ENCODE measurements at regions of chr3 and their contacts with region 1.

Region 1: GRCh38 chr3:183385698-183386613 is 42.5 kb downstream of the MCF2L2 start:
- DNase-seq: no peak
- ATAC-seq: peak; percentile 85
- H3K4me3 ChIP-seq: no peak overlapping the region
- H3K27ac ChIP-seq: no peak overlapping the region
- H3K4me1 ChIP-seq: peaks cover 7% of the 10 kb centered on the region; the same call in 1 of the 2 replicates
- H3K27me3 ChIP-seq: no peaks in the 10 kb centered on the region
- CTCF ChIP-seq: peak; percentile 63 to 87 (median 81); a peak in 5 of 6 replicates
- EP300 ChIP-seq: no peak
- POLR2A ChIP-seq: no peak
- RAD21 ChIP-seq: peak; percentile 84

Region 2: GRCh38 chr3:183085634-183086390 is 300.1 kb before region 1 on chr3:
- CTCF ChIA-PET with region 1: interaction called, 13 read pairs
- POLR2A ChIA-PET with region 1: no interaction called
- RAD21 ChIA-PET with region 1: interaction called, 3 read pairs
- SMC1A ChIA-PET with region 1: interaction called, 5 read pairs
- in situ Hi-C with region 1: no loop called
- intact Hi-C with region 1: no loop called
- DNase-seq: no peak
- ATAC-seq: peak; percentile 54
- H3K4me3 ChIP-seq: no peak overlapping the region
- H3K27ac ChIP-seq: no peak overlapping the region
- H3K4me1 ChIP-seq: no peaks in the 10 kb centered on the region
- H3K27me3 ChIP-seq: no peaks in the 10 kb centered on the region
- CTCF ChIP-seq: peak; percentile 26 to 50 (median 36); a peak in 5 of 6 replicates
- EP300 ChIP-seq: no peak
- POLR2A ChIP-seq: no peak
- RAD21 ChIP-seq: peak; percentile 23; the same call in 1 of the 2 replicates

Region 3: GRCh38 chr3:183158551-183159006 is 227.4 kb before region 1 on chr3:
- CTCF ChIA-PET with region 1: interaction called, 10 read pairs
- POLR2A ChIA-PET with region 1: no interaction called
- RAD21 ChIA-PET with region 1: interaction called, 7 read pairs
- SMC1A ChIA-PET with region 1: interaction called, 22 read pairs
- in situ Hi-C with region 1: no loop called
- intact Hi-C with region 1: no loop called
- DNase-seq: peak; percentile 97
- ATAC-seq: peak; percentile 71
- H3K4me3 ChIP-seq: peak overlapping the region; percentile 84
- H3K27ac ChIP-seq: peak overlapping the region; percentile 91
- H3K4me1 ChIP-seq: peaks cover 43% of the 10 kb centered on the region
- H3K27me3 ChIP-seq: no peaks in the 10 kb centered on the region
- CTCF ChIP-seq: no peak
- EP300 ChIP-seq: peak; percentile 90 to 91
- POLR2A ChIP-seq: no peak; the same call in 1 of the 2 replicates
- RAD21 ChIP-seq: no peak

Region 4: DNA sequence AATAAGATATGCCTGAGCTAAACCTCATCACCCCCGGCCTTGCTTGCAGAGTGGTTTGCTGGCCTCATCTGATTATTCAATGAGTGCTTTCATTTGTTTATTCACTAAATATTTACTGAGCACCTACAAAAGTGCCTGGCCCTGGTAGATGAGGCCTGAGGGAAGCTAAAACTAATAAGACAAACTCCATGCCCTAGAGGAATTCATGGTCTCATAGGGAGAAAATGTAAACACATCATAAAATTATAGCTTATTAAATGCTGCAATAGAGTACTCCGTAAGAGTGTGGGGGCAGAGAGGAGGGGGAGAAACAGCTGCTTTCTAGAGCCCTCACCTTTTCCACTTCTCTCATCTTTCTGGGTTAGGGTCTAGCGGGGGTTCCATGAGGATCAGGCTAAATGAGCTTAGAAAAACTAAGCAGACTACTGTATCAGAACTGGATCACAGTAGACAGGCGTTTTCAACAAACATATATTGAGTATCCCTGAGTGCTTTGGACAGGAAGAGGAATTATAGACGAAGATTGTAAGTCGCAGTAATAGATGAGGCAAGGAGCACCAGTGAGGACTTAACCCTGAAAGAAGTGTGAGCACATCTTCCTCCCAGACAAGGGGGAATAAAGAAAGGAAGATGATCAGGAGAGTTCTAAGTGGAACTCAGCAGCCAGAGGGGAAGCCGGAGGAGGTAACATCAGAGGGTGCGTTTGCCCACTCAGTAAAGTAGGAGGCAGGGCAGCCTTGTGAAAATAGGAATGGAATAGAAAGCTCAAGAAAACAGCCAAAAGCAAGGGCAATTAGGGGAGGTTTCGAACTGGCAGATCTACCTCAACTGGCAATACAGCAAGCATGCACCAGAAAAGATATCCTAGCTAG is 191.9 kb before region 1 on chr3:
- CTCF ChIA-PET with region 1: interaction called, 400 read pairs
- POLR2A ChIA-PET with region 1: no interaction called
- RAD21 ChIA-PET with region 1: interaction called, 4 read pairs
- SMC1A ChIA-PET with region 1: interaction called, 19 read pairs
- in situ Hi-C with region 1: no loop called
- intact Hi-C with region 1: no loop called
- DNase-seq: no peak
- ATAC-seq: no peak
- H3K4me3 ChIP-seq: no peak overlapping the region
- H3K27ac ChIP-seq: no peak overlapping the region
- H3K4me1 ChIP-seq: no peaks in the 10 kb centered on the region
- H3K27me3 ChIP-seq: no peaks in the 10 kb centered on the region
- CTCF ChIP-seq: no peak
- EP300 ChIP-seq: no peak
- POLR2A ChIP-seq: no peak
- RAD21 ChIP-seq: no peak

Region 5: GRCh38 chr3:183244981-183245476 is 140.9 kb before region 1 on chr3:
- CTCF ChIA-PET with region 1: no interaction called
- POLR2A ChIA-PET with region 1: no interaction called
- RAD21 ChIA-PET with region 1: no interaction called
- SMC1A ChIA-PET with region 1: no interaction called
- in situ Hi-C with region 1: no loop called
- intact Hi-C with region 1: no loop called
- DNase-seq: no peak
- ATAC-seq: no peak; the same call in 2 of the 3 replicates
- H3K4me3 ChIP-seq: no peak overlapping the region
- H3K27ac ChIP-seq: no peak overlapping the region
- H3K4me1 ChIP-seq: no peaks in the 10 kb centered on the region
- H3K27me3 ChIP-seq: no peaks in the 10 kb centered on the region; a peak in 2 of 4 replicates
- CTCF ChIP-seq: no peak
- EP300 ChIP-seq: no peak
- POLR2A ChIP-seq: no peak
- RAD21 ChIP-seq: no peak

Region 6: DNA sequence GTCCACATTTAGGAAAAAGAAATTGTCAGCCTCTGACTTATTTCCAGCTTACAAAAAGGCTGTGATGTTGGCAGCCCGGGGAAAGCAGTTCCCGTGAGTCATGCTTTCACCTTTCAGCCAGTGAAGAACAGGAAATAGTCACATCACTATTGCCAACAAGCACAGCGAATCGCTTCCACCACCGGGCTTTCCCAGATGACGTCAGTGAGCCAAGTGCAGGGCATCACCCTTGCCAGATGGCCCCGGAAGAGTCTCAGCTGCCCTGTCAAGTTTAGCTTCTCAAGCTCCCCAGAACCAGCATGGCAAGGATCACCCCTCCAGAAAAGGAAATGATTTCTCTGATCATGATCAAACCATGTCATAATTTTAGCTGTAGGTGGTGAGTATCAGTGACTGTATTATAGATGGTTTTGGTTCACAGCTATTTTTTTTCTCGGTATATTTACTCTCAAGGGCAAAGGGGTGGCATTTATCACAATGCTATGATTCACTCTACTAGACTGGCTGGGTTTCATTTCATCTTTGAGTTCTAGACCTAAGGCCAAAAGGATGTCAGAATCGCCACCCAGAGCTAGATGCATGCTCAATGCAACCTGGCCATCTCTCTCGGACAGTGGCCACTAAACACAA is 100.0 kb before region 1 on chr3:
- CTCF ChIA-PET with region 1: interaction called, 18 read pairs
- POLR2A ChIA-PET with region 1: interaction called, 3 read pairs
- RAD21 ChIA-PET with region 1: interaction called, 20 read pairs
- SMC1A ChIA-PET with region 1: interaction called, 19 read pairs
- in situ Hi-C with region 1: no loop called
- intact Hi-C with region 1: no loop called
- DNase-seq: peak; percentile 81
- ATAC-seq: peak; percentile 95
- H3K4me3 ChIP-seq: no peak overlapping the region
- H3K27ac ChIP-seq: peak overlapping the region; percentile 2; the same call in 1 of the 2 replicates
- H3K4me1 ChIP-seq: peaks cover 5% of the 10 kb centered on the region
- H3K27me3 ChIP-seq: no peaks in the 10 kb centered on the region
- CTCF ChIP-seq: no peak
- EP300 ChIP-seq: peak; percentile 66 to 76; a peak in 3 of 4 replicates
- POLR2A ChIP-seq: no peak
- RAD21 ChIP-seq: no peak

Measured in GM12878 (cell line).